ENCODE measurements at regions of chr4 and their contacts with region 1.

Region 1: GRCh38 chr4:931960-932712 is at the starts of genes GAK and TMEM175:
- DNase-seq: peak; percentile 90 to 99 (median 96)
- ATAC-seq: peak; percentile 91
- H3K4me3 ChIP-seq: peak within 1 kb of the TSS; percentile 91 to 96
- H3K4me3 Mint-ChIP-seq: peak within 1 kb of the TSS; percentile 96
- H3K27ac ChIP-seq: peak within 1 kb of the TSS; percentile 91 to 92
- H3K27ac Mint-ChIP-seq: peak within 1 kb of the TSS; percentile 97
- H3K4me1 ChIP-seq: peaks cover 39% of the 10 kb centered on the region
- H3K4me1 Mint-ChIP-seq: peaks cover 51% of the 10 kb centered on the region
- H3K27me3 ChIP-seq: no peaks in the 10 kb centered on the region
- H3K27me3 Mint-ChIP-seq: no peaks in the 10 kb centered on the region
- CTCF ChIP-seq: no peak
- total RNA-seq, gene GAK: 161 to 162 TPM
- total RNA-seq, gene TMEM175: 44.9 to 47.2 TPM

Region 2: GRCh38 chr4:876780-877179 is 55.4 kb before region 1 on chr4:
- CTCF ChIA-PET with region 1: interaction called, 3 read pairs
- POLR2A ChIA-PET with region 1: interaction called, 8 read pairs
- intact Hi-C with region 1: loop called (anchors 2 to 10 kb)
- DNase-seq: peak in 2 of 9 experiments; percentile 19 to 37
- ATAC-seq: no peak
- H3K4me3 ChIP-seq: no peak overlapping the region
- H3K4me3 Mint-ChIP-seq: no peak overlapping the region
- H3K27ac ChIP-seq: no peak overlapping the region
- H3K27ac Mint-ChIP-seq: no peak overlapping the region
- H3K4me1 ChIP-seq: peaks cover 23% of the 10 kb centered on the region
- H3K4me1 Mint-ChIP-seq: peaks cover 27% of the 10 kb centered on the region
- H3K27me3 ChIP-seq: no peaks in the 10 kb centered on the region
- H3K27me3 Mint-ChIP-seq: no peaks in the 10 kb centered on the region
- CTCF ChIP-seq: no peak

Region 3: GRCh38 chr4:973431-974397 is 41.6 kb after region 1 on chr4 and contains the start of gene DGKQ:
- CTCF ChIA-PET with region 1: no interaction called
- POLR2A ChIA-PET with region 1: interaction called, 6 read pairs
- intact Hi-C with region 1: loop called (anchors 1 kb)
- DNase-seq: peak; percentile 83 to 95 (median 89)
- ATAC-seq: peak; percentile 82
- H3K4me3 ChIP-seq: peak within 1 kb of the TSS; percentile 74 to 77
- H3K4me3 Mint-ChIP-seq: peak within 1 kb of the TSS; percentile 62
- H3K27ac ChIP-seq: peak within 1 kb of the TSS; percentile 56 to 85
- H3K27ac Mint-ChIP-seq: peak within 1 kb of the TSS; percentile 37
- H3K4me1 ChIP-seq: peaks cover 32% of the 10 kb centered on the region
- H3K4me1 Mint-ChIP-seq: peaks cover 17% of the 10 kb centered on the region
- H3K27me3 ChIP-seq: no peaks in the 10 kb centered on the region
- H3K27me3 Mint-ChIP-seq: no peaks in the 10 kb centered on the region
- CTCF ChIP-seq: no peak
- total RNA-seq, gene DGKQ: 28.2 to 29.7 TPM

Measured in CD8-positive, alpha-beta T cell (primary cell).